ENCODE measurements at regions of chr19 and their contacts with region 1.

Region 1: GRCh38 chr19:40598121-40598917 is 2.9 kb upstream of the LTBP4 start:
- DNase-seq: peak; percentile 70
- H3K4me3 ChIP-seq: no peak overlapping the region
- H3K27ac ChIP-seq: no peak overlapping the region
- H3K4me1 ChIP-seq: peaks cover 38% of the 10 kb centered on the region
- H3K27me3 ChIP-seq: no peaks in the 10 kb centered on the region
- CTCF ChIP-seq: peak; percentile 98 to 99

Region 2: GRCh38 chr19:40139533-40140287 is 458.6 kb before region 1 on chr19:
- CTCF ChIA-PET with region 1: no interaction called
- dilution Hi-C with region 1: no loop called
- in situ Hi-C with region 1: no loop called
- intact Hi-C with region 1: loop called (anchors 10 kb)
- DNase-seq: peak; percentile 23
- H3K4me3 ChIP-seq: no peak overlapping the region
- H3K27ac ChIP-seq: no peak overlapping the region
- H3K4me1 ChIP-seq: no peaks in the 10 kb centered on the region
- H3K27me3 ChIP-seq: no peaks in the 10 kb centered on the region
- CTCF ChIP-seq: peak; percentile 59 to 75

Region 3: GRCh38 chr19:40425450-40426287 is 172.7 kb before region 1 on chr19 and contains the start of gene SERTAD1:
- CTCF ChIA-PET with region 1: interaction called, 5 read pairs
- dilution Hi-C with region 1: loop called (anchors 5 kb)
- in situ Hi-C with region 1: no loop called
- intact Hi-C with region 1: loop called (anchors 1 kb)
- DNase-seq: peak; percentile 99
- H3K4me3 ChIP-seq: peak within 1 kb of the TSS; percentile 77 to 92 (median 83)
- H3K27ac ChIP-seq: peak within 1 kb of the TSS; percentile 89
- H3K4me1 ChIP-seq: peaks cover 34% of the 10 kb centered on the region
- H3K27me3 ChIP-seq: no peaks in the 10 kb centered on the region
- CTCF ChIP-seq: peak; percentile 21 to 73
- total RNA-seq, gene SERTAD1: 20.6 to 25.8 TPM

Region 4: GRCh38 chr19:40529093-40529954 is 69.0 kb before region 1 on chr19:
- CTCF ChIA-PET with region 1: no interaction called
- dilution Hi-C with region 1: no loop called
- in situ Hi-C with region 1: no loop called
- intact Hi-C with region 1: loop called (anchors 1 kb)
- DNase-seq: peak; percentile 64
- H3K4me3 ChIP-seq: peak overlapping the region; percentile 28 to 29 (median 29)
- H3K27ac ChIP-seq: no peak overlapping the region
- H3K4me1 ChIP-seq: peaks cover 3% of the 10 kb centered on the region
- H3K27me3 ChIP-seq: no peaks in the 10 kb centered on the region
- CTCF ChIP-seq: peak; percentile 72 to 96

Region 5: DNA sequence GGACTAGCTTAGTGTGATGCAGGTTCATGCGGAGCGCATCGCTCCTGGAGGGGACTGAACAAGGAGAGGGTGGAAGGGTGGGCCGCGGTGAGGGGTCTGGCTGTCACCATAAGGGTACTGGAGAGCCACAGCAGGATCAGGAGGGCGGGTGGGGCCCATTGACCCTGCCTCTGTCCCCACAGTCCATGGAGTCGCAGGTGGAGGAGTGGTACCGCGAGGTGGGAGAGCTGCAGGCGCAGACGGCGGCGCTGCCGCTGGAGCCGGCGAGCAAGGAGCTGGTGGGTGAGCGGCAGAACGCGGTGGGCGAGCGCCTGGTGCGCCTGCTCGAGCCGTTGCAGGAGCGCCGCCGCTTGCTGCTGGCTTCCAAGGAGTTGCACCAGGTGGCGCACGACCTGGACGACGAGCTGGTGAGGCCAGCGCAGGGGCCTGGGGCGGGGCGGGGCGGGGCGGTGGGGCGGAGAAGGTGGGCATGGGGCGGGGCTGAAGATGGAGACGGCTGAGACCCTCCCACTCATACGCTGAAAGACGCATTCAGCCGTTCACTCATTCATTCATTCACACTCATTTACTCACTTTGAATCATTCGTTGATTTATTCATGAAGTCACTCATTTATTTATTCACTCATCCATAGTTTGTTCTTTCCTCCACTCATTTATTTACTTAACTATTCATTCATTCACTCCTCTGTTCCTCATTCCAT is 49.2 kb before region 1 on chr19:
- CTCF ChIA-PET with region 1: no interaction called
- dilution Hi-C with region 1: no loop called
- in situ Hi-C with region 1: no loop called
- intact Hi-C with region 1: loop called (anchors 1 kb)
- DNase-seq: peak; percentile 30
- H3K4me3 ChIP-seq: no peak overlapping the region
- H3K27ac ChIP-seq: no peak overlapping the region
- H3K4me1 ChIP-seq: peaks cover 2% of the 10 kb centered on the region
- H3K27me3 ChIP-seq: peaks cover 2% of the 10 kb centered on the region
- CTCF ChIP-seq: peak; percentile 20 to 66

Region 6: DNA sequence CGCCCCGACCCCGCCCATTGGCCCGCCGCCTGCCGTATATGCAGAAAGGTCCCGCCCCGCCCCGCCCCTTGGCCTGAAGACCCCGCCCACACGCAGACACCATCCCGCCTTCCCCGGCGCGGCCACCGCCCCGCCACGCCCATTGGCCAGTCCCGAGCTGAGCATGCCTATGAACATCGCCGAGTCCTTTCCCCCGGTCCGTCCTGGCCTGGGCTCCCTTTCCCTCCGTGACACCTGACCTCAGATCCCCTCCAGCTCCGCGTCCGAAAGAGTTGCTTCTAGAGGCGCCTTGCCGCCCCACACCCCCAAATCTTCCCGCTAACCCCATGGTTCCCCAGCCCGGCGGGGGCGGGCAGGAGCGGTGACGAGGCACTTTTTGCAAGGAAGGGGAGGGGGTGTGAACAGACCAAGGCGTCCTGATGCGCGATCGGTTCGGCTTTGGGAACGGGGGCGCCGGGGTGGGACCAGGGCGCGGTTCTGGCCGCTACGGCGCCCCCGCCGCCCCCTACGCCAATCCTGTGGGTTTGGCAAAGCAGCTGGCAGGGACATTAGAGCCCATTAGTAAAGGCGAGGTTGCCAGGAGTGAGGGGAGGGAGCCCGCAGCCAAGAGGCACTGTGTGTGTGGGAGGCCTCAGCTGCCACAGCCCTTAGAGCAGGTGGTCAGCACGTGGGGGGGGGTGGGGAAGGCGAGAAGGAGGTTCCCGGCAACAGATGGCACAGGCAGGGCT is 92.5 kb after region 1 on chr19:
- CTCF ChIA-PET with region 1: no interaction called
- dilution Hi-C with region 1: no loop called
- in situ Hi-C with region 1: no loop called
- intact Hi-C with region 1: no loop called
- DNase-seq: peak; percentile 86
- H3K4me3 ChIP-seq: peak overlapping the region; percentile 29 to 61 (median 39)
- H3K27ac ChIP-seq: peak overlapping the region; percentile 50
- H3K4me1 ChIP-seq: peaks cover 18% of the 10 kb centered on the region
- H3K27me3 ChIP-seq: no peaks in the 10 kb centered on the region
- CTCF ChIP-seq: no peak